ENCODE measurements at regions of chr10 and their contacts with region 1.

Region 1: GRCh38 chr10:35195361-35196306 is 69.0 kb downstream of the CREM start:
- DNase-seq: peak; percentile 82
- H3K4me3 ChIP-seq: peak overlapping the region; percentile 45
- H3K27me3 ChIP-seq: no peaks in the 10 kb centered on the region
- CTCF ChIP-seq: peak; percentile 88

Region 2: DNA sequence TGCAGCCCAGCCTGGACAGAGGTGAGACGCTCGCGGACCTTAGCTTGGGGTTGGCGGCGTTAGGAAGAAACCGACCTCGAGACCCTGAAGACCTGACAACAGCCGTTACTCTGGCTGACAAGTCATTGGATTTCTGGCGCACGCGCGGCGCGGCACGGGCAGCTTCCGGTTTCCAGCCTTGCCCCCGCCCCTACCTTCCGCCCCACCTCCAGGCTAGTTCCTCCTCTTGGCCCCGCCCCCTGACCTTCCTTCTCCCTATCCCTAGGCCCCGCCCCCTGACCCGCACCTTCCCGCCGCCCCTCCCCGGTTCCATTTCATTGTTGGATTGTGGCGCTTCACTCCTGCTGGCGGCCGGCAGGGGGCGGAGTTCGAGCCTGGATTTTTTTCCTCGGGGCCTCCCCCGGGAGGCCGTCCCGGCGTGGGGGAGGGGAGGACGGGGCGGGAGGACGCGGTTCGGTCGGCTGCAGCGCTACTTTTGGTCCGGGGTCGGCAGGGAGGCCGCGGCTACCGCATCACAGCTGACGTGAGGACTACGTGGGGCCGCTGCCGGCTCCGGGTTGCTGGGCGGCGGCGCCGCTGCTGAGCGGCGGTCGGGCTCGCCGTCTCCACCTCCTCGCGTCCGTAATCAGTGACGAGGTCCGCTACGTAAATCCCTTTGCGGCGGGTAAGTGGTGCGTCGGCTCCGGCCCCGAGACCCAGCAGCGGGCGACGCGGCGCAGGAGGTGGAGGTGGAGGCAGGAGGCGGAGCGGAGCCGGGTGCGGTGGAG is 68.9 kb before region 1 on chr10 and contains the start of gene CREM:
- CTCF ChIA-PET with region 1: interaction called, 24 read pairs
- POLR2A ChIA-PET with region 1: interaction called, 5 read pairs
- DNase-seq: peak; percentile 65
- H3K4me3 ChIP-seq: peak within 1 kb of the TSS; percentile 90
- H3K27me3 ChIP-seq: no peaks in the 10 kb centered on the region
- CTCF ChIP-seq: peak; percentile 95
- polyA plus RNA-seq, gene CREM: 20.5 and 28.8 TPM in 2 replicates

Region 3: GRCh38 chr10:35184527-35185171 is 11.0 kb before region 1 on chr10:
- CTCF ChIA-PET with region 1: interaction called, 16 read pairs
- POLR2A ChIA-PET with region 1: no interaction called
- DNase-seq: no peak
- H3K4me3 ChIP-seq: no peak overlapping the region
- H3K27me3 ChIP-seq: no peaks in the 10 kb centered on the region
- CTCF ChIP-seq: no peak

Region 4: GRCh38 chr10:35218339-35218955 is 22.8 kb after region 1 on chr10:
- CTCF ChIA-PET with region 1: interaction called, 18 read pairs
- POLR2A ChIA-PET with region 1: no interaction called
- DNase-seq: peak; percentile 25
- H3K4me3 ChIP-seq: no peak overlapping the region
- H3K27me3 ChIP-seq: no peaks in the 10 kb centered on the region; the same call in 1 of the 2 replicates
- CTCF ChIP-seq: peak; percentile 74

Region 5: DNA sequence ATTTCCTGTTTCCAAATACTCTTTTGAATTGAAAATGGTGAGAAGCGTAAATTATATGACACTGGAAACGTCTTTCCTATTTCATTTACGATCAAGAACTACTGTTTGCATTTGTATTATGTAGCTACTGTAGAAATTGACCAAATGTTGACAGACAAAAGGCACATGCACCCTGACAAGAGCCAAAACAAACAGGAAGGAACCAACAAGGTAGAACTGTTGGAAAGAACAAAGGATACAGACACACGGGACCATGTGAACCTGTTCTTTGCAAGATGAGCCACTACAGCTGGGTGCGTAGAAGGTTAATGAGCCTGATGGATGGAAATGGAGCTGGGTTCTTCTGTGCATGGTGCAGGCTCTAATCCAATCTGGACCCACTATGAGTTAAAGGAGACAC is 494.9 kb after region 1 on chr10:
- CTCF ChIA-PET with region 1: no interaction called
- POLR2A ChIA-PET with region 1: no interaction called
- DNase-seq: no peak
- H3K4me3 ChIP-seq: no peak overlapping the region
- H3K27me3 ChIP-seq: peaks cover 4% of the 10 kb centered on the region
- CTCF ChIP-seq: no peak